Heart left ventricle (tissue), 16 donors: ENCODE measurements at regions of chr11 and their contacts with region 1.

Region 1: GRCh38 chr11:60775420-60775961 is 9.6 kb upstream of the MS4A10 start:
- DNase-seq: peak; percentile 73 to 85 (median 83)
- ATAC-seq: peak; percentile 79 to 86 (median 85)
- H3K4me3 ChIP-seq: no peak overlapping the region
- H3K27ac ChIP-seq: peak overlapping the region in 6 of 12 donors; percentile 17 to 59 (median 49)
- H3K4me1 ChIP-seq: peaks cover 0 to 22% (median 9%) of the 10 kb centered on the region in 12 donors
- H3K27me3 ChIP-seq: peaks cover 0 to 14% (median 0%) of the 10 kb centered on the region in 9 donors
- CTCF ChIP-seq: peak; percentile 79 to 97 (median 92)
- POLR2A ChIP-seq: no peak

Region 2: GRCh38 chr11:60887556-60887955 is 112.1 kb after region 1 on chr11:
- intact Hi-C with region 1: loop called in 1 of 10 experiments (anchors 2 kb)
- DNase-seq: no peak
- ATAC-seq: peak; percentile 65 to 86 (median 80)
- H3K4me3 ChIP-seq: no peak overlapping the region
- H3K27ac ChIP-seq: no peak overlapping the region
- H3K4me1 ChIP-seq: peaks cover 0 to 23% (median 12%) of the 10 kb centered on the region in 12 donors
- H3K27me3 ChIP-seq: no peaks in the 10 kb centered on the region
- CTCF ChIP-seq: peak; percentile 33 to 63 (median 54)
- POLR2A ChIP-seq: no peak

Region 3: GRCh38 chr11:60899046-60899936 is 123.8 kb after region 1 on chr11:
- intact Hi-C with region 1: loop called in 9 of 10 experiments (anchors 5 kb)
- DNase-seq: no peak
- ATAC-seq: peak in 3 of 4 donors; percentile 69 to 70 (median 70)
- H3K4me3 ChIP-seq: no peak overlapping the region
- H3K27ac ChIP-seq: no peak overlapping the region
- H3K4me1 ChIP-seq: peaks cover 0 to 15% (median 5%) of the 10 kb centered on the region in 12 donors
- H3K27me3 ChIP-seq: no peaks in the 10 kb centered on the region
- CTCF ChIP-seq: peak; percentile 90 to 98 (median 94)
- POLR2A ChIP-seq: no peak

Region 4: DNA sequence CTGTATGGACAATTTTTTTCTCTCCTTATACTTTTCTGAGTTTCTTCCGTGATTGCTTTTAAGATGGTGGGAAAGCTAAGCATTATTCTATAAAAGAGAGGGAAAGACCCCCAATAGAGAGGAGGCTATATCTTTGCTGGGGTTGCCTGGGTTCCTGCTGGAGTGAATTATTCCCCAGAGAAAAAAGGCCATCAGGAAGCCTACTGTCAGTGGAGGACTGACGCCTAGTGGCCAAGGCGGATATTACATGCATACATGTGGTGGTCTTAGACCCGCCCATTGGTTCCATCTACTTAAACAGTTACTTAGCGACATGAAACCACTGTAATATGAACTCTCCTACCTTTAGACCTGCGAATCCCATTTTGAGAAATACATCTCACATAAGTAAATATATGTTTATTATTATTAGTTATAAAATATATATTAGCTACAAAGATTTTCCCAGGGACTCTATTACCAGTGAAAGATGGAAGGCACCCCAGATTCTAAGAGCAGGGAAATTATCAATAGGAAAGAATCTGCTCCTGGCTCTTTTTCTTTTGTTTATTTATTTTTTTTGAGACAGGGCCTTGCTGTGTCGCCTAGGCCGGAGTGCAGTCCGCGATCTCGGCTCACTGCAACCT is 412.1 kb after region 1 on chr11:
- intact Hi-C with region 1: loop called in 3 of 10 experiments (anchors 5 to 10 kb)
- DNase-seq: peak; percentile 52 to 81 (median 66)
- ATAC-seq: peak in 3 of 4 donors; percentile 64 to 76 (median 72)
- H3K4me3 ChIP-seq: no peak overlapping the region
- H3K27ac ChIP-seq: no peak overlapping the region
- H3K4me1 ChIP-seq: no peaks in the 10 kb centered on the region
- H3K27me3 ChIP-seq: peaks cover 0 to 16% (median 0%) of the 10 kb centered on the region in 9 donors
- CTCF ChIP-seq: peak; percentile 76 to 97 (median 93)
- POLR2A ChIP-seq: no peak